Activated CD4-positive, alpha-beta memory T cell treated with anti-CD3 and anti-CD28 coated beads for 36 hours (primary cell): ENCODE measurements at regions of chr9 and their contacts with region 1.

Region 1: DNA sequence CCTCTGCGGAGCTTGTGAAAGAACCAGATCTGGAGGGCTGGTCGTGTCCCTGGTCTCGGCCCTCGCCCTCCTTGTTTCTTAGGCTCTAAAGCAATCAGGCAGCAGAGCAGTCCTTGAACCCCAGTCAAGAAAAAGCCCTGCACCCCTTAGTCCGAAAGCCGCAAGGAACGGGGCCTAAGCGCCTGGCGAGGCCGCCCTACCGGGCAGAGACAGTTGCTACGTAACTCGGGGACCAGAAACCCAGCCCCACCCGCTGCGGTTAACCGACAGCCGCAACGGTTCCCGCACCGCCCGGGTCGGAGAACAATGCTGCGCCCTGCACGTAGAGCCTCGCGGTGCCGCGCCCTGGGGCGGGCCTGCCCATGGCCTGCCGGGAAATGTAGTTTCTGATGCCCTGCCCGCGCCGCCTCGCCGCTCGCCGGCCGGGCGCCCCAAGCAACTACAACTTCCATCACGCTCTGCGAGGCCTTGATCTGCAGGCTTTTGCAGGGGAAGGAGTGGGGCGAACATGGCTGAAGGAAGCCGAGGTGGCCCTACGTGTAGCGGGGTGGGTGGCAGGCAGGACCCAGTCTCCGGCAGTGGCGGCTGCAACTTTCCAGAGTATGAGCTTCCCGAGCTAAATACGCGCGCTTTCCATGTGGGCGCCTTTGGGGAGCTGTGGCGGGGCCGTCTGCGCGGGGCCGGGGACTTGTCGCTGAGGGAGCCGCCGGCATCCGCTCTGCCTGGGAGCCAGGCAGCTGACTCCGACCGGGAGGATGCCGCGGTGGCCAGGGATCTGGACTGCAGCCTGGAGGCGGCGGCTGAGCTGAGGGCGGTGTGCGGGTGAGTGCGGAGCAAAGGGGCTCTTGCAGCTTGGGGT is at the start of gene SNAPC3:
- DNase-seq: peak; percentile 96
- H3K4me3 Mint-ChIP-seq: peak within 1 kb of the TSS; percentile 90
- H3K27ac Mint-ChIP-seq: peak within 1 kb of the TSS; percentile 81
- H3K4me1 Mint-ChIP-seq: peaks cover 29% of the 10 kb centered on the region
- H3K27me3 Mint-ChIP-seq: no peaks in the 10 kb centered on the region
- total RNA-seq, gene SNAPC3: 31.2 to 35.1 TPM

Region 2: GRCh38 chr9:13823026-13823425 is 1599.6 kb before region 1 on chr9:
- CTCF ChIA-PET with region 1: no interaction called
- POLR2A ChIA-PET with region 1: no interaction called
- intact Hi-C with region 1: no loop called
- DNase-seq: no peak
- H3K4me3 Mint-ChIP-seq: no peak overlapping the region
- H3K27ac Mint-ChIP-seq: no peak overlapping the region
- H3K4me1 Mint-ChIP-seq: no peaks in the 10 kb centered on the region
- H3K27me3 Mint-ChIP-seq: no peaks in the 10 kb centered on the region

Region 3: GRCh38 chr9:15231788-15232635 is 190.6 kb before region 1 on chr9:
- CTCF ChIA-PET with region 1: interaction called, 4 read pairs
- POLR2A ChIA-PET with region 1: no interaction called
- intact Hi-C with region 1: loop called (anchors 1 kb)
- DNase-seq: peak; percentile 39
- H3K4me3 Mint-ChIP-seq: no peak overlapping the region
- H3K27ac Mint-ChIP-seq: no peak overlapping the region
- H3K4me1 Mint-ChIP-seq: peaks cover 49% of the 10 kb centered on the region
- H3K27me3 Mint-ChIP-seq: no peaks in the 10 kb centered on the region

Region 4: GRCh38 chr9:15277400-15278090 is 145.1 kb before region 1 on chr9:
- CTCF ChIA-PET with region 1: interaction called, 10 read pairs
- POLR2A ChIA-PET with region 1: no interaction called
- intact Hi-C with region 1: loop called (anchors 2 kb)
- DNase-seq: no peak
- H3K4me3 Mint-ChIP-seq: no peak overlapping the region
- H3K27ac Mint-ChIP-seq: peak overlapping the region; percentile 51
- H3K4me1 Mint-ChIP-seq: peaks cover 27% of the 10 kb centered on the region
- H3K27me3 Mint-ChIP-seq: no peaks in the 10 kb centered on the region

Region 5: DNA sequence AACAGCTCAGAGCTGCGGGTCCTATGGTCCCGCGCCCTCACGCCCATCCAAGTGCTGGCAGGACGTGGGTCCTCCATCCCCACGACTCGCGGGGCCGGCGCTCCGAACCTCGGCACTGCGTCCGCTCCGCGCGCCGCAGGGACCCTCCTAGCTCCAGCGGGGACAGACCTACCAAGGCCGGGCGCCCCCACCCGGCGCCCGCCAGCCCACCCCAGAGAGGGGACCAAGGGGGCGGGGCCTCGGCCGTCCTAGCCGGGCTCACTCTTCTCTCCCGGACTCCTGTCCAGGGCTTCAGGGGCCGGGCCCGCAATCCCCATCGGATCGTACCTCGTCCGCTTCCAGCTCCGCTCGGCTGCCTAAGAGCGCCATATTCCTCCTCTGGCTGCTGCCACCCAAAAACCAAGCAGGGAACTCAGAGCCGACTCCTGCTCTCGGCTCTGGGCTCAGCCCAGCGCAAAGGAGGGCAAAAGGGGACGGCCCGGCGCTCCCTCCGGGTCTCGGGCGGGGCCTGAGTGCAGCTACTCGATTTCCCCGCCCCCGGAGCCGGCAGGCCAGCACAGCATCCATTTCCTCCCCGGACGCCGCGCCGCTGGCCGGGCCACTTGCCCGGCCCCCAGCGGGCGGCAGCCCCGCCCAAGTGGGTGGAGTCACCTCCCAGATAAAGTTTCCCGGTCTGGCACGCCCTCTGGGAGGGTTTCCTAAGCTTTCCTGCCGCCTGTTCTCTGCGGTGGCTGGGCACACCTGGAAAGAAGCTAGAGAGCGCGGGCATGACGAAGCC is 115.7 kb before region 1 on chr9 and contains the start of gene TTC39B:
- CTCF ChIA-PET with region 1: interaction called, 3 read pairs
- POLR2A ChIA-PET with region 1: interaction called, 7 read pairs
- intact Hi-C with region 1: loop called (anchors 2 kb)
- DNase-seq: peak; percentile 89
- H3K4me3 Mint-ChIP-seq: peak within 1 kb of the TSS; percentile 99
- H3K27ac Mint-ChIP-seq: peak within 1 kb of the TSS; percentile 96
- H3K4me1 Mint-ChIP-seq: peaks cover 48% of the 10 kb centered on the region
- H3K27me3 Mint-ChIP-seq: no peaks in the 10 kb centered on the region
- total RNA-seq, gene TTC39B: 30.3 to 31.7 TPM

Region 6: DNA sequence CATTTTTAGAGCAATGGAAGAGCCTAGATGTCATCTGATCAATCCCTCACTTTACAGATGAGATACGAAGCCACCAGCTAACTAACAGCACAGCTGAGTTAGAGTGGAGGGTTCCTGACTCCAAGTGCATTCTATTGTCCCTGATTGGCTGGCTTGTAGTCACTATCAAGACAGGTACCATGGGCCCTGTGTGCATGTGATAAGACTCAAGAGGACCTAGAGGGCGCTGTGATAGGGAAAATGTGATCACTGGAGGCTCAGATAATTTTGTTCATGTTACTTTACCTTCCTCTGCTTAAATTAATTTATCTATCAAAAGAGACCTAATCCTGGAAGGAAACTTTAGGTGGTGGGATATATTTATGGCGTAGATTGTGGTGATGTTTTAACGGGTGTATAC is 19.4 kb before region 1 on chr9:
- CTCF ChIA-PET with region 1: no interaction called
- POLR2A ChIA-PET with region 1: no interaction called
- intact Hi-C with region 1: no loop called
- DNase-seq: no peak
- H3K4me3 Mint-ChIP-seq: no peak overlapping the region
- H3K27ac Mint-ChIP-seq: no peak overlapping the region
- H3K4me1 Mint-ChIP-seq: no peaks in the 10 kb centered on the region
- H3K27me3 Mint-ChIP-seq: no peaks in the 10 kb centered on the region

Region 7: GRCh38 chr9:15510789-15511575 is 88.4 kb after region 1 on chr9 and contains the start of gene PSIP1:
- CTCF ChIA-PET with region 1: interaction called, 7 read pairs
- POLR2A ChIA-PET with region 1: interaction called, 11 read pairs
- intact Hi-C with region 1: loop called (anchors 1 kb)
- DNase-seq: peak; percentile 94
- H3K4me3 Mint-ChIP-seq: peak within 1 kb of the TSS; percentile 88
- H3K27ac Mint-ChIP-seq: peak within 1 kb of the TSS; percentile 100
- H3K4me1 Mint-ChIP-seq: peaks cover 50% of the 10 kb centered on the region
- H3K27me3 Mint-ChIP-seq: no peaks in the 10 kb centered on the region
- total RNA-seq, gene PSIP1: 132 to 134 TPM

Region 8: DNA sequence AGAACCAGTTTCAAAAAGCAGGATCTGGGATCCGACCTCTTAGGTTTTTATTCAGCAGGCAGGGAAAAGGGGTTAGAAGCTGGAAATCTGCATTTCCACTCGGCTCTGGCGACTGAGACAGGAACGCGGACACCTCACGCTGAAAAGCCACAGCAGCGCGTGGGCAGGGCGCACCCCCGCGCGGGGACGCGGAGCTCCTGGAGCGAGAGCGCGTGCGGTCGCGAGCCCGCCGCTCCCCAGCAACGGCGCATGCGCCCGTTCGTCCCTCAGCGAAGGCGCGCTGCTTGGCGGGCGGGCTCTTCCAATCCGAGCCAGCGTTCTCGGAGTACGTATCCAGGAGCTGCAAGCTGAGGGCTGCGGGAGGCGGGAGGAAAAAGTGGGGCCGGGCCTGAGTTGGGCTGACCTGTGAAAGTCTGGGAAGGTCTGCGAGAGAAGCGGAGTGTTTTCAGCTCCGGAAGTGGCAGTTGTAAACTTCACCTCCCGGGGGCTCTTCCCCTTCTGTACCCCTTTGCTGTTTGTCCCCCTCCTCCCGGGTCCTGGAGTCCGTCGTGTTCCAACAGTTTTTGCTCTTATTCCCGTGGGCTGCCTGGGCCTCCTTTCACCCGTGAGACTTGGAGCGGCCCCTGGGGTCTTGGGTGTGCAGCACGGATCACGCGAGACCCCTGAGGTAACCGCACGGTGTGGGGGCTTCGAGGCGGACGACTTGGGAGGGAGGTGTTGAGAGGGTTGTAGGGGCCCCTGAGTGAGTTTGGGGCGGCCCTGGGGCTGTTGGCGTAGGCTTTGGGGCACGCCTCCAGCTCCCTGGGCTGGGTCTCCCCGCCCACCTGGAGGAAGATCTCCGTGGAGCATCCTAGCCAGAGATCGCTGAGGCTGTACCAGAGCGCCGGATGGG is 130.3 kb after region 1 on chr9 and contains the start of gene CCDC171:
- CTCF ChIA-PET with region 1: interaction called, 6 read pairs
- POLR2A ChIA-PET with region 1: no interaction called
- intact Hi-C with region 1: loop called (anchors 1 kb)
- DNase-seq: peak; percentile 92
- H3K4me3 Mint-ChIP-seq: peak within 1 kb of the TSS; percentile 79
- H3K27ac Mint-ChIP-seq: peak within 1 kb of the TSS; percentile 61
- H3K4me1 Mint-ChIP-seq: peaks cover 11% of the 10 kb centered on the region
- H3K27me3 Mint-ChIP-seq: no peaks in the 10 kb centered on the region
- total RNA-seq, gene CCDC171: 2.5 to 2.7 TPM